A549 (cell line): ENCODE measurements at regions of chr11 and their contacts with region 1.

Region 1: DNA sequence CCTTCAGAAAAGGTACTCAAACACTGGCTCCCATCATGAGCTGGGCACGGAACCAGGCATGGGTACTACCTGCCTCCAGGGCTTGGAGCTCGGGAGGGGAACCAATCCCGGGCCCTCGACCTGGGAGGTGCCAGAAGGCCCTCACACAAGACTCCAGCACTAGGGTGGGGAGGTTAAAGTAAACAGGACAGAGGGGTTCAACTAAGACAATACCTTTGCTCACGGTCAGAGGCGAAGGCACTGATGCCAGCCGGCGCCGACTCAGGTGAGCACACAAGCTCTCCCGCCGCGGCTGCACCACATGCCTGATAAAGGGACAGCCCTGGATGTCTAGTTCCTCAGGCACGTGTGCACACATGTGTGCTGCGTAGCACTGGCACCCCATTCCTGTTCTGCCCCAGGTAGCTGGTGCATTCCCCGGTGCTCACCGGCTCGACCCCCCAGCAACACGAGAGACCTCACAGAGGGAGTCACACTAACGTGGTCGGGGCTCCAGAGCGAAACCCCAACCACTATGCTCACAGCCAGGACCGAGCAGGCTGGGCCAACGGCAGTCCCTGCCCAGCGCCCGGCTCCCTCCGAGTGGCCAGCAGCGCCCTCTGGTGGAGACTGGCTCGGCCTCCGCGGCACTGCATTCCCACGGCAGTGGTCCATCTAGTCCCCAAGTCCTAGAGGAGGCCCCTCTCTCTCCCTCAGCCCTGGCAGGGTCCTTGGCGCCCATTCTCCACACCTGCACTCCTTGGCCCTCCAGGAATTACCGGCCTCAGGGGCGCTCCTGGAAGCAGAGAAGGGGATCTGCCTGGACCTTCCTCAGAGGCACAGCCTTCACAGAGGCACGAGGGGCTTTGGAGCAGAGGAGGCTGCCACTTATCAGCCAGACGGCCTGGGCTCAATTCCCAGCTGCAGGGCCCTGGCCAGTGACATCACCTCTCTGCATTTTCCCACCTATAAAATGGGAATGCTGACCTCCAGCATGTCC is 28.8 kb upstream of the MOB2 start:
- DNase-seq: peak; percentile 52 to 93
- ATAC-seq: peak; percentile 76 to 96
- H3K4me3 ChIP-seq: no peak overlapping the region
- H3K27ac ChIP-seq: peak overlapping the region in 1 of 2 experiments; percentile 54; a peak in 2 of 6 replicates
- H3K4me1 ChIP-seq: peaks cover 7% of the 10 kb centered on the region; the same call in 1 of the 3 replicates
- CTCF ChIP-seq: peak; percentile 80
- EP300 ChIP-seq: no peak
- POLR2A ChIP-seq: no peak
- RAD21 ChIP-seq: peak; percentile 83 to 84

Region 2: DNA sequence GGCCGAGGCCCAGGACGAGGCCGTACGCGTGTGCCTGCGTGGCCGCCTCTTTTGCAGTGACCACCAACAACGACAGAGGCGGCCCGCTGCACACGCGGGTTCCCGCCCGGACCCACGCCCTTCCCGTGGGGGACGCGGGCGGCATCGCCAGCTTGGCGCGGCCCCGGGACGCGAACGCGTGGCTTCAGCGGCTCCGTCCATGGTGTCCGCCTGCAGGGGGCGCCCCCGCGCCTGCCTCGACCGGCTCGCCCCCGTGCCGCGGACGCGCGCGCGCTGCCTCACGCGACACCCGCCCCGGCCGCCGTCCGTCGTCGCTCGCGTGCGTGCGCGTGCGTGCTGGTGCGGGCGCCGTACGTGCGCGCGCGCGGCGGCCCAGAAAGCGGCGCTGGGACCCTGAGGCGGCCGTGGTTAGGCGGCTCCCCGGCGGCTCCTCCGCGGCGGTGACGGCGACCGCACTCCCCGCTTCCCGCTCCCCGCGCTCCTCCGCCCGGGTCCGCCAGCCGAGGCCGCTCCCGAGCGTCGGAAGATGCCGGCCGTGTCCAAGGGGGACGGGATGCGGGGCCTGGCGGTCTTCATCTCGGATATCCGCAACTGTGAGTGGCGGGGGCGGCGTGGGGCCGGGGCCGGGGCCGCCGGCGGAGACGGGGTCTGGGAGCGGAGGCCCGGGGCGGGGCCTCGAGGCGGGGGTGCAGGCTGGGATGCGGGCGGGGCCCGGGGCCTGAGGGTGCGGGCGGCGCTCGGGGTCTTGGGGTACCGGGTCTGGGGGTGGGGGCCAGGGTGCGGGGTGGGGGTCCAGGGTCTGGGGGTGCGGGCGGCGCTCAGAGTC is 589.7 kb before region 1 on chr11 and contains the start of gene AP2A2:
- CTCF ChIA-PET with region 1: no interaction called
- POLR2A ChIA-PET with region 1: no interaction called
- DNase-seq: peak; percentile 84 to 90
- ATAC-seq: peak; percentile 67 to 81
- H3K4me3 ChIP-seq: peak within 1 kb of the TSS; percentile 96
- H3K27ac ChIP-seq: peak within 1 kb of the TSS; percentile 98 to 99
- H3K4me1 ChIP-seq: peaks cover 13% of the 10 kb centered on the region
- CTCF ChIP-seq: peak; percentile 97
- EP300 ChIP-seq: no peak
- POLR2A ChIP-seq: peak; percentile 84
- RAD21 ChIP-seq: peak in 1 of 2 experiments; percentile 76; a peak in 4 of 5 replicates
- polyA plus RNA-seq, gene AP2A2: 60.4 and 72.6 TPM in 2 replicates

Region 3: DNA sequence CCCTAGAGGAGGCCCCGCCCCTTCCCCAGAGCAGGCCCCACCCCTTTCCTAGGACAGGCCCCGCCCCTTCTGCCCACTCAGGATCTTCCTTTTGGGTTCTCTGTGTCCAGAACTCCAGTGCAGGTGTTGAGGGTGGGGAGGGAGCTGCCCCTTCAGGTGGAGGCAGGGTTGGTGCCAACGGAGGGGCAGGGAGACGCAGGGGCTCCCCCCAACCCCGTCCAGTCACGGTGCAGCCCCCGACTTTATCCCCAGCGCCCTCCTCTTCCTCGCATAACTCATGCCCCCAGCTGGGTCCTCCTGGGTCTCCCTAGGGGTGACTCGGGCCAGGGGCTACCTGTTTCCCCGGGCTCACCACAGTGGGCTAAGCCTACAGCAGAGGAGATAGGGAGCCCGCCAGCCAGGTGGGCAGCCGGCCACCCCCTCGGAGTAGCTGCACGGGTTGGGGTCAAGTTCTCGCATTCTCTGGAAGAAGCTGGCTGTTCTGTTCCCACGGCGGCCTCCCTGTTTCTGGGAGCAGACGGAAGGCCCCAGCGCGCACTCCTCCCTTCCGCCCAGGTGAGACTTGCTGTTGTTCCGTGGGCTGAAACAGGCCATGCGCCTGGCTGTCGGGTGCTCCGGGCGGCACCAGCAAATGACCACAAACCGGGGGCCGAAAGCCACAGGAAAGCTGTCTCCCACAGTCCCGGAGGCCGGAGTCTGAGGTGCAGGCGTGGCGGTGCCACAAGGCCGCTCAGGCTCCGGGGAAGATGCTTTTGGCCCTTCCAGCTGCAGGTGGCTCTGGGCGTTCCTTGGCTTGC is 401.8 kb before region 1 on chr11:
- CTCF ChIA-PET with region 1: interaction called, 29 read pairs
- POLR2A ChIA-PET with region 1: no interaction called
- DNase-seq: no peak
- ATAC-seq: peak; percentile 28 to 34; a peak in 4 of 6 replicates
- H3K4me3 ChIP-seq: no peak overlapping the region
- H3K27ac ChIP-seq: peak overlapping the region; percentile 2 to 41; a peak in 4 of 6 replicates
- H3K4me1 ChIP-seq: 0 out of 3 replicates have a peak, but pooled peaks cover 5% of the 10 kb centered on the region
- CTCF ChIP-seq: no peak
- EP300 ChIP-seq: no peak
- POLR2A ChIP-seq: no peak
- RAD21 ChIP-seq: no peak

Region 4: DNA sequence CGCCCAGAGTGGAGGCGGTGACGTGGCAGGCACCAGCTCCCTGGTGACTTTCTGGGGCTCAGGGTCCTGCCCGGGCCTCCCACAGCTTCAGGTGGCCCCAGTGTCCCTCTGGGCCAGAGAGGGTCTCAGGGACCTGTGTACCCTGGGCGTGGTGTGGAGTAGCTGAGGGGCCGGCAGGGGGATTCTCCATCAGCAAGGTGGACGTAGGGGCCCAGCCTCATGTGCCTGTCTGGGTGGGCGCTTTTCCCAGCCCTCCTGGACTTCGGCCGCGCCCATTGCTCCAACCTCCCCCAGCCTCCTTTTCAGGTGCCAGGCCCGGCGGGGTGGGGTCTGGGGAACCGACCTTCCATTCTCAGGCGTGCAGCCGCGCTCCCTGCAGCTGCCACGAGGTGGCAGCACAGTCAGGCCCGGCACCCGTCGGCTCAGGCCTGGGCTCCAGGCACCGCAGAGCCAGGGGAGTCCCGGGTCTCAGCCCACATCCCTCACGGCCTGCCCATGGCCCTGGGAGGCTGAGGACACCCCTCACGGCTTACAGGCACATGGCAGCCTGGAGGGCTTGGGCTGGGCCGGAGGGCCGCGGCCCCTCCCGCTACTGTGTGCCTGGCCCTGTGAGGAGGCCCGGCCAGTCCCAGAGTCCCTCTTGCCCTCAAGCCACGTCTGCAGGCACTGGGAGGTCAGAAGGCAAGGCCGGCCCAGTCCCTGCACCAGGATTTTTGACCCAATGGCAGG is 312.4 kb before region 1 on chr11:
- CTCF ChIA-PET with region 1: interaction called, 34 read pairs
- POLR2A ChIA-PET with region 1: no interaction called
- DNase-seq: peak; percentile 67 to 89
- ATAC-seq: peak; percentile 73 to 89
- H3K4me3 ChIP-seq: no peak overlapping the region
- H3K27ac ChIP-seq: peak overlapping the region; percentile 72 to 86
- H3K4me1 ChIP-seq: peaks cover 18% of the 10 kb centered on the region
- CTCF ChIP-seq: peak; percentile 84
- EP300 ChIP-seq: no peak
- POLR2A ChIP-seq: no peak
- RAD21 ChIP-seq: peak; percentile 73 to 88

Region 5: DNA sequence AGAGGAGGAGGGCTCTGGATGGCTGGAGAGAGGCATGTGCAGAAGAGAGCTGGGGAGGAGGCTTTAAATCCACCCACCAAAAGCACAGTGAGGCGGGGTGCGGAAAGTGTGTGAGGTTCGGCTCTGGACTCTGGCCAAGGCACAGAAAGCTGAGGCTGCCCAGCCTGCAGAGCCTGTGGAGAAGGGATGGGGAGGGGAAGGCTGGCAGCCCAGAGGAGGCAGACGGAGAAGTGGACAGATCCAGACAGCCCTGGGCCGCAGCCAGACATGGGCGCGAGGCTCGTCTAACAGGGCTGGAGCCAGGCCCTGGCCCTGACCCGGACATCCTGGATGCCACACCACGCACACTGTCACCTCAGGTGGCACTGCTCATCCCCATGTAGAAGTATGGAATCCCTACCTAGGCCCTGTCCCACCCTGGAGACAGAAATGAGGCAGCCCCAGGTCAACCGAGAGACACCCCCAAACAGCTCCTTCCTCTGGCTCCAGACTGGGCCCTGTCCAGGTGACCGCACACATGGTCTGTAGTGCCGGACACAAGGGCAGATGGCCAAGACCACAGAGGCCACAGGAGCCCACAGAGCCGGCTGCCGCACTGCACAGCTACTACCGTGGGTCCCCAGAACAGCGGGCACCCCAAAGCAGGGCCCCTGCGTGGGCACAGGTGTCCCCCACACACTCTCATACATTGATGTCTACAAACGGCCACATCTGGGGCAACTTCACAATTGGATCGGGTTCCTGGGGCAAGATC is 12.2 kb before region 1 on chr11:
- CTCF ChIA-PET with region 1: interaction called, 21 read pairs
- POLR2A ChIA-PET with region 1: interaction called, 4 read pairs
- DNase-seq: no peak
- ATAC-seq: no peak
- H3K4me3 ChIP-seq: no peak overlapping the region
- H3K27ac ChIP-seq: no peak overlapping the region
- H3K4me1 ChIP-seq: no peaks in the 10 kb centered on the region
- CTCF ChIP-seq: no peak
- EP300 ChIP-seq: no peak
- POLR2A ChIP-seq: no peak
- RAD21 ChIP-seq: no peak

Region 6: GRCh38 chr11:1559119-1559951 is 44.0 kb after region 1 on chr11:
- CTCF ChIA-PET with region 1: no interaction called
- POLR2A ChIA-PET with region 1: no interaction called
- DNase-seq: peak; percentile 65 to 74
- ATAC-seq: peak; percentile 41 to 45
- H3K4me3 ChIP-seq: peak overlapping the region; percentile 21; the same call in 2 of the 3 replicates
- H3K27ac ChIP-seq: peak overlapping the region; percentile 86 to 90
- H3K4me1 ChIP-seq: peaks cover 57% of the 10 kb centered on the region
- CTCF ChIP-seq: no peak
- EP300 ChIP-seq: peak in 1 of 2 experiments; percentile 31; a peak in 2 of 5 replicates
- POLR2A ChIP-seq: no peak
- RAD21 ChIP-seq: no peak